AG04450 (cell line): ENCODE measurements at regions of chr10 and their contacts with region 1.

Region 1: GRCh38 chr10:13271552-13272163 is 28.2 kb downstream of the PHYH start:
- DNase-seq: no peak
- H3K4me3 ChIP-seq: no peak overlapping the region
- H3K27ac ChIP-seq: no peak overlapping the region
- H3K27me3 ChIP-seq: no peaks in the 10 kb centered on the region
- CTCF ChIP-seq: peak; percentile 57

Region 2: GRCh38 chr10:13299437-13300287 is 28.0 kb after region 1 on chr10 and contains the start of gene PHYH:
- CTCF ChIA-PET with region 1: interaction called, 16 read pairs
- POLR2A ChIA-PET with region 1: interaction called, 8 read pairs
- DNase-seq: peak; percentile 33
- H3K4me3 ChIP-seq: peak within 1 kb of the TSS; percentile 68
- H3K27ac ChIP-seq: peak within 1 kb of the TSS; percentile 68
- H3K27me3 ChIP-seq: no peaks in the 10 kb centered on the region
- CTCF ChIP-seq: no peak
- polyA plus RNA-seq, gene PHYH: 15.3 and 16.7 TPM in 2 replicates

Region 3: GRCh38 chr10:13649844-13650521 is 378.3 kb after region 1 on chr10:
- CTCF ChIA-PET with region 1: no interaction called
- POLR2A ChIA-PET with region 1: no interaction called
- DNase-seq: no peak
- H3K4me3 ChIP-seq: no peak overlapping the region
- H3K27ac ChIP-seq: no peak overlapping the region
- H3K27me3 ChIP-seq: no peaks in the 10 kb centered on the region
- CTCF ChIP-seq: no peak

Region 4: DNA sequence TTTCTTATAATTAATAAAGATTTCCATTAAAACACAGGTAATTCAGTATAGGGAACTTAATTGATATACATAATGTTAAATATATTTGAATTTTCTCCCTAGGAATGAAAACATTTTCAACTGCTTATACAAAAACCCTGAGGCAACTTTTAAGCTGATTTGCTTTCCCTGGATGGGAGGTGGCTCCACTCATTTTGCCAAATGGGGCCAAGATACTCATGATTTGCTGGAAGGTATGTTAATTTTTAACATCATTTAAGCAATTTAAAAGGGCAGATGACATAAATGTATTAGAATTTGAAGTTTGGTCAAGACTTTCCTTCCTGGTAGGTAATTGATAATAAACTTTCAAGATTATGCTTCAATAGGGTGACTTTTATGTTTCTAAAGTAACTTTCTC is 1777.9 kb after region 1 on chr10:
- CTCF ChIA-PET with region 1: no interaction called
- POLR2A ChIA-PET with region 1: interaction called, 12 read pairs
- DNase-seq: no peak
- H3K4me3 ChIP-seq: no peak overlapping the region
- H3K27ac ChIP-seq: no peak overlapping the region
- H3K27me3 ChIP-seq: peaks cover 2% of the 10 kb centered on the region
- CTCF ChIP-seq: no peak